Activated naive CD4-positive, alpha-beta T cell treated with anti-CD3 and anti-CD28 coated beads for 36 hours (primary cell): ENCODE measurements at regions of chr1 and their contacts with region 1.

Region 1: DNA sequence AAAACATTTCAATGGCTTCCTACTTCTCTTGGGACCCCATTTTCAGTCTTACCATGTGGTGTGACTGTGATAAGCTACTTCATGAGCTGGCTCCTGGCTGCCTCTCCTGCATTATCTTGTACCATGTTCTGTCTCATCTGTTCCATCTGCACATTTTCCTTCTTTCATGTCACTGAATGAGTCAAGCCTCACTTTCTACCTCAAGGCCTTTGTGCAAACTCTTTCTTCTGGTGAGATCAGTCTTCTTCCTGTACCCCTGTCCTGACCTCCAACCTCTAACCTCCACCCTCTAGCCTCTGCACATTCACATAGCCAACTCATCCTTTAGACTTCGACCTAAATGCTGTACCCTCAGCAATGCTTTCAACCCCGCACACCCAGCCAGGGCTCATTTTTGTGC is 9.6 kb upstream of the FAM78B start:
- DNase-seq: peak; percentile 6
- H3K4me3 Mint-ChIP-seq: no peak overlapping the region
- H3K27ac Mint-ChIP-seq: no peak overlapping the region
- H3K4me1 Mint-ChIP-seq: peaks cover 2% of the 10 kb centered on the region
- H3K27me3 Mint-ChIP-seq: peaks cover 9% of the 10 kb centered on the region

Region 2: GRCh38 chr1:166133276-166133841 is 43.1 kb before region 1 on chr1:
- CTCF ChIA-PET with region 1: interaction called, 3 read pairs
- intact Hi-C with region 1: loop called (anchors 2 kb)
- DNase-seq: peak; percentile 40
- H3K4me3 Mint-ChIP-seq: no peak overlapping the region
- H3K27ac Mint-ChIP-seq: no peak overlapping the region
- H3K4me1 Mint-ChIP-seq: no peaks in the 10 kb centered on the region
- H3K27me3 Mint-ChIP-seq: peaks cover 16% of the 10 kb centered on the region